OCI-LY7 (cell line): ENCODE measurements at regions of chr13 and their contacts with region 1.

Region 1: DNA sequence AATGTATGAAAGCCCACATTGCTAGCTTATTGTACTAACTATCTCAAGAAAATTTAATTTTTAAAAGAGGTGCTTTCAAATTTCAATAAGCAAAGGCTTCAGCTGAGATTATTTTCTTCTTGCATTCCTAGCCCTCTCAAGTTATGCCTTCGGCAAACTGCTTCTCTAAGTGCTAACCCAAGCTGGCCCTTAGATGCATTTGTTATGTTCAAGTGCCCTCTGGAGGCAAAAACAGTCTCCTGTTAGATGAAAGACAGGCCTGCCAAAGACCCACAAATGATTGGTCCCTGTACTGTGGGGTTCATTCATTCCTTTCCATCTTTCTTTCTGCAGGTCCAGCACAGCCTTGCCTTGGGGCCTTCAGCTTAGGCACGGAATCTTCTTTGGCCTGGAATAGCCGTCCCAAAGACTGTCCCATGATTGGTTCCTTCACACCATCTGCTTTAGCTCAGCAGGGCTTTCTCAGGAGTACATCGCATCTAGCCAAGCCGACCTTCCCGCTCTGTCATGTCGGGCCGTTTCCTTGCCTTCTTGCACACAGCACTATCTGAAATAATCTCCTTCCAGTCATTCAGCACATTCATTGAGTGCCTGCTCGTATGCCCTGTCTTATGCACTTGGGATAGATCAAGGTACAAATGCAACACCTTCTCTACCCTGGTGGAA is 26.4 kb upstream of the TPTE2 start:
- DNase-seq: peak; percentile 59
- H3K4me3 ChIP-seq: no peak overlapping the region
- H3K27ac ChIP-seq: no peak overlapping the region
- H3K4me1 ChIP-seq: peaks cover 10% of the 10 kb centered on the region
- CTCF ChIP-seq: peak; percentile 92

Region 2: GRCh38 chr13:18906681-18907080 is 681.1 kb before region 1 on chr13:
- CTCF ChIA-PET with region 1: no interaction called
- POLR2A ChIA-PET with region 1: no interaction called
- intact Hi-C with region 1: no loop called
- DNase-seq: no peak
- H3K4me3 ChIP-seq: no peak overlapping the region
- H3K27ac ChIP-seq: no peak overlapping the region
- H3K4me1 ChIP-seq: no peaks in the 10 kb centered on the region
- CTCF ChIP-seq: no peak

Region 3: GRCh38 chr13:19153782-19154450 is 433.9 kb before region 1 on chr13:
- CTCF ChIA-PET with region 1: no interaction called
- POLR2A ChIA-PET with region 1: no interaction called
- intact Hi-C with region 1: loop called (anchors 5 kb)
- DNase-seq: no peak
- H3K4me3 ChIP-seq: no peak overlapping the region
- H3K27ac ChIP-seq: no peak overlapping the region
- H3K4me1 ChIP-seq: no peaks in the 10 kb centered on the region
- CTCF ChIP-seq: peak; percentile 34; the same call in 1 of the 2 replicates

Region 4: GRCh38 chr13:19567820-19568534 is 19.8 kb before region 1 on chr13:
- CTCF ChIA-PET with region 1: no interaction called
- POLR2A ChIA-PET with region 1: interaction called, 15 read pairs
- intact Hi-C with region 1: loop called (anchors 1 kb)
- DNase-seq: no peak
- H3K4me3 ChIP-seq: no peak overlapping the region
- H3K27ac ChIP-seq: no peak overlapping the region
- H3K4me1 ChIP-seq: peaks cover 5% of the 10 kb centered on the region
- CTCF ChIP-seq: no peak

Region 5: GRCh38 chr13:19645000-19645399 is 57.2 kb after region 1 on chr13:
- CTCF ChIA-PET with region 1: no interaction called
- POLR2A ChIA-PET with region 1: no interaction called
- intact Hi-C with region 1: no loop called
- DNase-seq: no peak
- H3K4me3 ChIP-seq: no peak overlapping the region
- H3K27ac ChIP-seq: no peak overlapping the region
- H3K4me1 ChIP-seq: no peaks in the 10 kb centered on the region
- CTCF ChIP-seq: no peak

Region 6: DNA sequence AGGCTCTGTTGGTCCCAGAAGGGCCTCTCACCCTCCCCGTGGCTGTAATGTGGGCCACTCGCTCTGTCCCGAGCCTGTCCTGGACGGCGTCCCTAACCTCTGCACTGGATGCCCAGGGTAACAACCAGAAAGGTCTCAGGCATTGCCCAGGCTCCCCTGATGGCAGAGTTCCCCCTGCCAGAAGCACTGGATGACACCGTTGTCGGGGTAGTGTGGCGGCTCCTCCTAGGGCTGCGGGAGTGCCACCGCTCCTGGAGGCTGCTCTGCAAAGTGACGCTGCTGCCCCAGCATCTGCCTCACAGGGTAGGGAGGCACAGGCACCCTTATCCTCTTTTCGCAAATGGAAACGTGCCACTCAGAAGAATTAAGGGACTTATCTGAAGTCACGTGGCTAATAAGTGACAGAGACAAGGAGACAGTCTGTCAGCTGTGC is 77.7 kb after region 1 on chr13:
- CTCF ChIA-PET with region 1: no interaction called
- POLR2A ChIA-PET with region 1: no interaction called
- intact Hi-C with region 1: no loop called
- DNase-seq: no peak
- H3K4me3 ChIP-seq: no peak overlapping the region
- H3K27ac ChIP-seq: no peak overlapping the region
- H3K4me1 ChIP-seq: no peaks in the 10 kb centered on the region
- CTCF ChIP-seq: no peak